ENCODE measurements at regions of chr10 and their contacts with region 1.

Region 1: GRCh38 chr10:7184660-7185366 is 226.0 kb downstream of the SFMBT2 start:
- DNase-seq: peak; percentile 72
- ATAC-seq: peak; percentile 80
- H3K4me3 ChIP-seq: peak overlapping the region in 4 of 5 experiments; percentile 4 to 52 (median 16)
- H3K4me3 Mint-ChIP-seq: peak overlapping the region; percentile 59
- H3K27ac ChIP-seq: peak overlapping the region; percentile 59 to 68
- H3K27ac Mint-ChIP-seq: peak overlapping the region; percentile 64
- H3K4me1 ChIP-seq: peaks cover 21 to 26% of the 10 kb centered on the region in 2 donors
- H3K4me1 Mint-ChIP-seq: peaks cover 35% of the 10 kb centered on the region
- H3K27me3 ChIP-seq: no peaks in the 10 kb centered on the region
- H3K27me3 Mint-ChIP-seq: no peaks in the 10 kb centered on the region
- CTCF ChIP-seq: no peak

Region 2: GRCh38 chr10:8349691-8350217 is 1164.9 kb after region 1 on chr10:
- CTCF ChIA-PET with region 1: no interaction called
- POLR2A ChIA-PET with region 1: no interaction called
- intact Hi-C with region 1: loop called (anchors 10 kb)
- DNase-seq: no peak
- ATAC-seq: no peak
- H3K4me3 ChIP-seq: no peak overlapping the region
- H3K4me3 Mint-ChIP-seq: no peak overlapping the region
- H3K27ac ChIP-seq: no peak overlapping the region
- H3K27ac Mint-ChIP-seq: no peak overlapping the region
- H3K4me1 ChIP-seq: no peaks in the 10 kb centered on the region
- H3K4me1 Mint-ChIP-seq: no peaks in the 10 kb centered on the region
- H3K27me3 ChIP-seq: no peaks in the 10 kb centered on the region
- H3K27me3 Mint-ChIP-seq: no peaks in the 10 kb centered on the region
- CTCF ChIP-seq: no peak

Region 3: DNA sequence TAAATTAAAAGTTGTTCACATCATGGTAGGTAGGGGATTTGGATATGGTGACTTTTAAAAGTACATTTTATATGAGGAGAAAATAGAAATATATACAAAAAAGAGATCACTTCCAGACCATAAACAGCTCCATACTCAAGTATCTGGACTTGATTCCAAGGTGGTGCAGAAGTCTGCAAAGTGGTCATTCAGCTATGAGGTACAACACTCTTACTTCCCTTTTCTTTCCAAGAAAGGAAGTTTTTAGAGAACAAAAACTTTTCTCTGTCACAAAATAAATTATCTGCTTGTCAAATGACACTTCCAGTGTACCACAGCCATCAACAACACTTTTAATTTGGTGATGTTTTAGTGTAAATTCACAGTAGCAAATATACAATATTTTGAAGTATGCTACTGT is 1883.2 kb after region 1 on chr10:
- CTCF ChIA-PET with region 1: no interaction called
- POLR2A ChIA-PET with region 1: no interaction called
- intact Hi-C with region 1: no loop called
- DNase-seq: no peak
- ATAC-seq: no peak
- H3K4me3 ChIP-seq: no peak overlapping the region
- H3K4me3 Mint-ChIP-seq: no peak overlapping the region
- H3K27ac ChIP-seq: no peak overlapping the region
- H3K27ac Mint-ChIP-seq: no peak overlapping the region
- H3K4me1 ChIP-seq: no peaks in the 10 kb centered on the region
- H3K4me1 Mint-ChIP-seq: no peaks in the 10 kb centered on the region
- H3K27me3 ChIP-seq: no peaks in the 10 kb centered on the region
- H3K27me3 Mint-ChIP-seq: no peaks in the 10 kb centered on the region
- CTCF ChIP-seq: no peak